ENCODE measurements at regions of chr5 and their contacts with region 1.

Region 1: DNA sequence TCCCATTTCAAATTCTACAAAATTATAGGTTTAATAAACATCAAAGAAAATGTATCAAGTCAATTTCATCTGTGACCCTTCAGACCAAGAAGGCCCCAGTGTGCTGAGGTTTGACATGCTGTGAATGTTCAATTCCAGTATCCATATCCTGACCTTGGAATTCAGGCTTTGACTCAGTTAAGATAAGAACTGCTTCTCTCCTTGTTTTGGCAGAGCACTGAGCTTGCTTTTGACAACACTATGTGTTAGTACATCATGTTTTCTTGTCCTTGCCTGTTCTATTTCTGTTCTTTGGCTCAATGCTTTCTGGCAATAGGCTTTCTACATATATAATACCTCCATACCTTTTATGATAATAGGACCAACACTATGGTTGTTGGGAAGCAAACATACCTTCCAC is 105.6 kb downstream of the PLCXD3 start:
- DNase-seq: no peak

Region 2: GRCh38 chr5:40165794-40166728 is 1238.7 kb before region 1 on chr5:
- intact Hi-C with region 1: loop called in 1 of 2 experiments (anchors 5 kb)
- DNase-seq: no peak

Region 3: GRCh38 chr5:41012318-41012717 is 392.4 kb before region 1 on chr5:
- intact Hi-C with region 1: loop called in 1 of 2 experiments (anchors 5 kb)
- DNase-seq: no peak

Region 4: DNA sequence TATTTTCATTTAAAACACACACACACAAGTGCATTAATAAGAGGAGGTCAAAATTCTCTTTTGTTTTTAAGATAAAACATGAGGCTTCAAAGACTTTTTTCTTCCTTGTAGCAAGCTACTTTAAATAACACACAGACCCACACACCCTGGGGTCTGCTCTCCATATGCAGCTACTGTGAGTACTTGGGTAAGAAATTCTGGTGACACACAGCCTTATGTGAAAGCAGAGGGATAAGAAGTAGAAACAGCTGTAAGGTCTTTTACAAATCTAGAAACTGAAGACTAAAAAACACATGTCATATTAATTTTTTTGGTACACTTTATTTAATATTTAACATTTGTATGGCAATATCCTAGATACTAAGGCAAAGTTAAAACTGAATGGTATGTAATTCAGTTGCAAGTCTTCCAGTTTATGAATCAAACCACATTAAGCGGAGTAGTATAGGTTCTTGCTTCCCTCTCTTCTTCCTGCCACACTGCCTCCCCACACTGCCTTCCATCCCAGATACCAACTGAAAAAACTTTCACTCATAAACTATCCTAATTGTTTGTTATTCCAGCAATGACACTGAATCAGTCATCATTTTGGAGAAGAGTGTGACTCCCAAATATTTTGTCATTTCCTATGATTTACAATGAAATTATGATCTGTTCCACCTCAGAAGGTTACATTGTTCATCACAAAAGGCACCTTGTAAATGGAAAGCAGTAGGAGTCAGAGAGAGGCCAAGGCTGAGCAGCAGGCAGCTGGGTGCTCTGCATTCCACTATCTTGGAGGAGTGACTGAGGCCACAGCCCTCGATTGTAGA is 13.7 kb after region 1 on chr5:
- intact Hi-C with region 1: loop called in 1 of 2 experiments (anchors 1 kb)
- DNase-seq: no peak

Measured in posterior vena cava (tissue), 2 donors.